Panc1 (cell line): ENCODE measurements at regions of chr6 and their contacts with region 1.

Region 1: GRCh38 chr6:125314019-125314581 is 12.3 kb upstream of the HDDC2 start:
- DNase-seq: peak; percentile 36
- ATAC-seq: peak; percentile 94
- H3K4me3 ChIP-seq: no peak overlapping the region
- H3K27ac ChIP-seq: no peak overlapping the region
- H3K4me1 ChIP-seq: no peaks in the 10 kb centered on the region
- H3K27me3 ChIP-seq: peaks cover 15% of the 10 kb centered on the region; the same call in 1 of the 2 replicates
- CTCF ChIP-seq: peak; percentile 91

Region 2: DNA sequence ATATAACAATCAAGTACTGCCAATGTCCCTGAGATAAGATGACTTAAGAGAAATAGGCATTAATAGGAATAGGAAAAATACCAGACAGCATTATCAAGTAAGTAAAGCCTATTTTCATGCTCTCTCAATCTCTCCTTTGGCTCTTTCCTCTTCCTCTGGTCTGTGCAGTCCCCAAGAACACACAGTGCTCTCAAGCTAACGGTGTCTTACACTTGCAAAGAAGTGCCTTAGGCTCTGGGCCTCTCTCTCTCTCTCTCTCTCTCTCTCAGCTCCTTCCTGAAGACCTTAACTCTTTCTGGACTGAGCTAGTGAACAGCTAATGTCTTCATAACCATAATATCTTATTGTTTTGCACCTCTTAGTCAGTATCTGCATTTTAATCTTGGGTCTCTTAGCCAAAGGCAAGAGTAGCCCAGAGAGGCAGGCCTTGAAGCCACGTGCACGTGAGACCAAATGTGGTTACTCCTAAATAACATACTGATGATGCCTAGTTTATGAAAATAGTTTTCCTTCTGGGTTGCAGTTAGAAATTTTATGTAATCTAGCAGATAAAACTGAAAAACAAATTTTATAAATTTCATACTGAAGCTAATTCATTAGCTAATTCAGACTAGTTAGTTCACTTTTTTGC is 89.8 kb before region 1 on chr6:
- CTCF ChIA-PET with region 1: no interaction called
- POLR2A ChIA-PET with region 1: no interaction called
- in situ Hi-C with region 1: no loop called
- intact Hi-C with region 1: no loop called
- DNase-seq: no peak
- ATAC-seq: no peak
- H3K4me3 ChIP-seq: no peak overlapping the region
- H3K27ac ChIP-seq: no peak overlapping the region
- H3K4me1 ChIP-seq: no peaks in the 10 kb centered on the region
- H3K27me3 ChIP-seq: peaks cover 10% of the 10 kb centered on the region; the same call in 1 of the 2 replicates
- CTCF ChIP-seq: no peak

Region 3: DNA sequence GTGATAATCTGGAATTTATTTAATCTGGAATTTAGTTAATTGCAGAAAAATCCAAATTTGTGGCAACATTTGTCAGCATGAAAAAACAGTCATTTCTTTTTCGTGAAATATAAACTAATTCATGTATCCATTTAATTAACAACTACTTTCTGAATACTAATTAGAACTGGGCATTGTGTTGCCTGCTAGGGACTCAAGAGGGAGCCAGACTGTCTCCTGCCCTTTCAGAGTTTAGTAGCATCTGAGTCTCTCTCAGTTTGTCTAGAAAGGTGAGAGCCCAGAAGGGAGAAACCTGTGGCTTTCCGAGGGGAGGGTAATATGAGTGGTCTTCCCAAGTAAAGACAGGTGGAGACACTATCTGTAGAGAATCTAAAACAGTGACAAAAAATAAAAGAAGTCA is 198.5 kb after region 1 on chr6:
- CTCF ChIA-PET with region 1: no interaction called
- POLR2A ChIA-PET with region 1: no interaction called
- in situ Hi-C with region 1: no loop called
- intact Hi-C with region 1: loop called (anchors 10 kb)
- DNase-seq: peak; percentile 13
- ATAC-seq: no peak
- H3K4me3 ChIP-seq: no peak overlapping the region
- H3K27ac ChIP-seq: no peak overlapping the region
- H3K4me1 ChIP-seq: no peaks in the 10 kb centered on the region
- H3K27me3 ChIP-seq: no peaks in the 10 kb centered on the region
- CTCF ChIP-seq: peak; percentile 61

Region 4: GRCh38 chr6:125749173-125749864 is 435.2 kb after region 1 on chr6 and contains the start of gene HEY2:
- CTCF ChIA-PET with region 1: interaction called, 6 read pairs
- POLR2A ChIA-PET with region 1: no interaction called
- in situ Hi-C with region 1: no loop called
- intact Hi-C with region 1: loop called (anchors 1 kb)
- DNase-seq: no peak
- ATAC-seq: peak; percentile 95
- H3K4me3 ChIP-seq: peak within 1 kb of the TSS; percentile 65 to 74
- H3K27ac ChIP-seq: no peak within 1 kb of the TSS
- H3K4me1 ChIP-seq: peaks cover 27% of the 10 kb centered on the region
- H3K27me3 ChIP-seq: peaks cover 79% of the 10 kb centered on the region
- CTCF ChIP-seq: no peak
- total RNA-seq, gene HEY2: not detected

Region 5: DNA sequence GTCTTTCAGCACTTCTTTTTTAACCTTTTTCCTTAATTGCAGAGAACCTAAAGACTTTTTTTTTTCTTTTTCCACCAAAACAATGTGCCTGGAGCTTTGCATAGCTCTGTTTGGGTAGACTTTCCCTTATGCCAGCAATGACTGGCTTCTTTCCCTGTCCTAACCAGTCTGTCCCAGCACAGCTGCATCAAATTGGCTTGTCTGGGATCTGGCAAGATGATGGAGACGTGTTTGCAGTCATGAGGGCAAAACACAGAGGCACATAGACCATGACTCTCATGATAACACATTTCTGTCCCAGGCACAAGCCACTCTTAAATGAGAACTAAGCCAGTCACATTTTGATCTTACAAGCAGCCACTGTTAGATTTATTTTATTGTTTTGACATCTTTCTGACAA is 451.8 kb after region 1 on chr6:
- CTCF ChIA-PET with region 1: interaction called, 6 read pairs
- POLR2A ChIA-PET with region 1: no interaction called
- in situ Hi-C with region 1: no loop called
- intact Hi-C with region 1: loop called (anchors 1 kb)
- DNase-seq: no peak
- ATAC-seq: no peak
- H3K4me3 ChIP-seq: no peak overlapping the region
- H3K27ac ChIP-seq: no peak overlapping the region
- H3K4me1 ChIP-seq: no peaks in the 10 kb centered on the region
- H3K27me3 ChIP-seq: peaks cover 20% of the 10 kb centered on the region; the same call in 1 of the 2 replicates
- CTCF ChIP-seq: no peak

Region 6: GRCh38 chr6:125910527-125910926 is 596.4 kb after region 1 on chr6:
- CTCF ChIA-PET with region 1: no interaction called
- POLR2A ChIA-PET with region 1: no interaction called
- in situ Hi-C with region 1: no loop called
- intact Hi-C with region 1: no loop called
- DNase-seq: no peak
- ATAC-seq: no peak
- H3K4me3 ChIP-seq: no peak overlapping the region
- H3K27ac ChIP-seq: no peak overlapping the region
- H3K4me1 ChIP-seq: no peaks in the 10 kb centered on the region
- H3K27me3 ChIP-seq: no peaks in the 10 kb centered on the region
- CTCF ChIP-seq: no peak

Region 7: DNA sequence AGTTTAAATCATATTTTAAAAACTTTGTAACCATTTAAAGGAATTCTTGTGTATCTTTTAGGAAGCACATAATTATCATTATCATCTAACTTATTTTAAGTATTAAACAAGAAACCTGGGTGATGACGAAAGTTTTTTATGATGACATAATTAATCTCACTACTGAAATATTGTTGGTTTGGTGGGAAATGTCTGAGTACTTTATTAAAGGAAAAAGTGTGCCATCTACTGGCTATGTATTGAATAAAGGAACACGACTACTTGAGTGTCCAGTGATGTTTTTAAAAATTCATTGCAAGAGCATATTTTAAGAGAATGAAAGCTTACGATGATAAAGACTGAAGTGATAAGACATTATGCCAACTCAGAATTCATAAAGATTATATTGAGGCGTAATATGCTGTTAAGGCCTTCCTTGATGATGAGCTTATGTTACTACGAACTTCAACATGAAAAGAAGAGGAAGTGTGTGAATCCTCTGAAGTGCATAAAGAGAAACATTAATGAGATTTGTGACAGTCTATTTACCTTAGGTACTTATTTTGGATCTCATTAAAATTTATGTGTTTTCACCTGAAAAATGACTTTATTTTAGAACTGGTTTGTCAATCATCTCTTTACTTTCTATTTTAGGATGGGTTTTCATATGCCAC is 660.2 kb after region 1 on chr6:
- CTCF ChIA-PET with region 1: no interaction called
- POLR2A ChIA-PET with region 1: no interaction called
- in situ Hi-C with region 1: no loop called
- intact Hi-C with region 1: loop called (anchors 5 kb)
- DNase-seq: no peak
- ATAC-seq: peak; percentile 91
- H3K4me3 ChIP-seq: no peak overlapping the region
- H3K27ac ChIP-seq: no peak overlapping the region
- H3K4me1 ChIP-seq: no peaks in the 10 kb centered on the region
- H3K27me3 ChIP-seq: no peaks in the 10 kb centered on the region
- CTCF ChIP-seq: peak; percentile 67; the same call in 1 of the 2 replicates